Thyroid gland (tissue), 4 donors: ENCODE measurements at regions of chr1 and their contacts with region 1.

Region 1: DNA sequence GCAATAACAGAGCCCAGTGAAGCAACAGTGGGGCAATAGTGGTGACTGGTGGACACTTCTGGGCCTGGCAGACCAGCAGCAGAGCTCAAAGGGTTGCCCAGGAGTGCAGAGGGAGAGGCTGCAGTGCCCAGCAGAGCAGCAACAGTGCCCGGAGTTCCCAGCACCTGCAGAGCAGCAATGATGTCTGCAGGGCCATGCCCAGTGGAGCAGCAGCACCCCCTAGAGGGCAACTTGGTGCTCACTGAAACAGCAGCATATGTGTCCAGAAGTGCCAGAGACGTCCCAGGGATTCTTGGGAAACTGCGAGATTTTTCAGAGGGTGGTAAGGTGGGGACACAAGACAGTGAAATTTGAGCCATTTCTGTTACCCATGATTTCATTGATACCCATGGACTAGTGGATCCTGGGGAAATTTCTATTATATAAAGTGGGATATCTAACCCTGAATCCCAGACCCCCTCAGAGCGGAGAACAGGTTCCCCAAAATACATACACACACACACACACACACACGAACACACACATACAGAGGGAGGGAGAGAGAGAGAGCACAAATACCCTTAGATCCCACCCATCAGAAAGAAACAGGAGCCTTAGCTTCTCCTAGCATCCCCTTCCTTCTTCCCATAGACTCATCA is 156.9 kb upstream of the GJB5 start:
- DNase-seq: peak; percentile 60 to 69
- H3K4me3 ChIP-seq: no peak overlapping the region
- H3K27ac ChIP-seq: no peak overlapping the region
- H3K4me1 ChIP-seq: no peaks in the 10 kb centered on the region
- H3K27me3 ChIP-seq: no peaks in the 10 kb centered on the region
- CTCF ChIP-seq: peak in 5 of 6 experiments; percentile 43 to 78 (median 67)
- POLR2A ChIP-seq: no peak

Region 2: DNA sequence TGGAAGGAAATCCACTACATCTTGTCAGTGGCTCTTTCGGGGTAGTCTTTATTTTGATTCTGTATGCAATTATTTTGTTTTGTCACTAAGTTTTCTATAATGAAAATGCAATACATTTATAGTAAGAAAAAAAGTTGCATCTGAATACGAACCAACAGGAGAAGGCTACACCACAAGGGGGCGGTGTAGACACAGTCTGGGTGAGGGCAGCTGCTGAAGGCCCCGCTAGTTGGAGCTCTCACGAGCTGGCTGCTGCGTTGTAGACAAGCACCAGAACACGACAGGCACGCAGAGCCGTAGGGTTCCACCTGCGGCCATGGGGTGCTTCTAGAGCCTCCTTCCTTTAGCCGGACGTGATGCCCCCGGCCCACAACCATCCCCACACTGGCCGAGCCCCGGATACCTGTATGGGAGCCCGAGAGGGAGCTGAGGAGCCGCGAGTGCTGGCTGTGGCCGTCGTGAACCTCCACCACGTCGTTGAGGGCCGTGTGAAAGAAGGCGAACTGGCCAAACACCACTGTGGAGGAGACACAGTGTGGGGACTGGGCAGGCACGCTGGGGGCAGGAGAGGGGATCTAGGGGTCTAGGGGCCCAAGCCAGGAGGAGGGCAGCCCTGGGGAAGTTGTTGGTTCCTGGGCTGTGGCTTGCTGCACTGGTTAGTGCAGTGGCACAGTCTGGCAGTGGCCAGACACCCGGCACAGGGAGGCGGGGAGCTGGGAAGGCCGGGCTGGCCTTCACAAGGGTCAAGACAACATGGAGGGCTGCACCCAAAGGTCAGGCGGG is 964.8 kb before region 1 on chr1:
- intact Hi-C with region 1: loop called (anchors 5 kb)
- DNase-seq: peak; percentile 89 to 94
- H3K4me3 ChIP-seq: no peak overlapping the region
- H3K27ac ChIP-seq: no peak overlapping the region
- H3K4me1 ChIP-seq: peaks cover 0 to 4% of the 10 kb centered on the region in 2 donors
- H3K27me3 ChIP-seq: no peaks in the 10 kb centered on the region
- CTCF ChIP-seq: peak; percentile 78 to 99 (median 88)
- POLR2A ChIP-seq: no peak

Region 3: GRCh38 chr1:34113887-34114286 is 484.1 kb before region 1 on chr1:
- intact Hi-C with region 1: loop called (anchors 10 kb)
- DNase-seq: no peak
- H3K4me3 ChIP-seq: no peak overlapping the region
- H3K27ac ChIP-seq: no peak overlapping the region
- H3K4me1 ChIP-seq: no peaks in the 10 kb centered on the region
- H3K27me3 ChIP-seq: no peaks in the 10 kb centered on the region
- CTCF ChIP-seq: no peak
- POLR2A ChIP-seq: no peak